ENCODE measurements at regions of chr18 and their contacts with region 1.

Region 1: DNA sequence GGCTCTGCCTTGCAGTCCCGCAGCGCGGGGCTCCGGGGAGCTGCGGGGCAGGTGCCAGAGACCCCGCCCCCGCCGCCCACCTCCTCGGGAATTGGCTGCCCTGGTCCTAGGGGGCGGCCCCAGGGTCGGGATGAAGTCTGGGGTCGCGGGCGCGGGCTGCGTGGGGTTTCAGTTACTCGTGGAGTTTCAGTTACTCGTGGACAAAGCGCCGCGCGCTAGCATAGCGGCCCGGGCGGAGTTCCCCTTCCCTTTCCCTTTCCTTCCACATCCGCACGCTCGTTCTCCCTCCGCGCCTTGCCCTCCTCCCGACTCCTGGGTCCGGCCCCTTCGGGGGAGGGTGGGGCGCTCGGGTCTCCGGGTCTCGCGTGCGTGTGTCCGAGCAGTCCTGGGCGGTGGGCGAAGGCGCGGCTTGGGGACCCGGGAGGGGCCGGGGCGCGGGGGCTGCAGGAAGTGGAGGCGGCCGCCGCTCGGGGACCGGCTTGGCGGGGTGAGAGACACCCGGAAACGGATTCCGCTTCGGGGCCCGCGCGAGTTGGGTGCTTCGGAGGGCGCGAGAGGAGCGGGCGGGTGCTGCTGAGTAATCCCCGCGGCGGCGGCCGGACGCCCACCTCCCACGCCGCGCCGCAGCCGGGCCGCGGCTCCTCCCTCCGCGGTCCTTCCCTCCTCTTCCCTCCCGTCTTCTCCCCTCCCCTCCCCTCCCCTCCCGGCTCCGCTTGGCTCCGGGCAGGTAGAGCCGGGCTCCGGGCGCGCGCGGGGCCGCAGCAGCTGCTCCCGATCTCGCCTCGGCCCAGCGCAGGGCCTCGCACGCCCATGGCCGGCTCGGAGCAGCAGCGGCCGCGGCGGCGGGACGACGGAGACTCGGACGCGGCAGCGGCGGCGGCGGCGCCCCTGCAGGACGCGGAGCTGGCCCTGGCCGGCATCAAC is at the start of gene TTC39C:
- DNase-seq: peak; percentile 58 to 90 (median 77)
- ATAC-seq: peak; percentile 60
- H3K4me3 ChIP-seq: peak within 1 kb of the TSS; percentile 91
- H3K4me3 Mint-ChIP-seq: peak within 1 kb of the TSS; percentile 94
- H3K27ac ChIP-seq: peak within 1 kb of the TSS; percentile 73 to 88
- H3K27ac Mint-ChIP-seq: peak within 1 kb of the TSS; percentile 90
- H3K4me1 ChIP-seq: peaks cover 67% of the 10 kb centered on the region
- H3K4me1 Mint-ChIP-seq: peaks cover 80% of the 10 kb centered on the region
- H3K27me3 ChIP-seq: no peaks in the 10 kb centered on the region
- H3K27me3 Mint-ChIP-seq: no peaks in the 10 kb centered on the region
- CTCF ChIP-seq: no peak
- total RNA-seq, gene TTC39C: 82.6 to 91.8 TPM

Region 2: DNA sequence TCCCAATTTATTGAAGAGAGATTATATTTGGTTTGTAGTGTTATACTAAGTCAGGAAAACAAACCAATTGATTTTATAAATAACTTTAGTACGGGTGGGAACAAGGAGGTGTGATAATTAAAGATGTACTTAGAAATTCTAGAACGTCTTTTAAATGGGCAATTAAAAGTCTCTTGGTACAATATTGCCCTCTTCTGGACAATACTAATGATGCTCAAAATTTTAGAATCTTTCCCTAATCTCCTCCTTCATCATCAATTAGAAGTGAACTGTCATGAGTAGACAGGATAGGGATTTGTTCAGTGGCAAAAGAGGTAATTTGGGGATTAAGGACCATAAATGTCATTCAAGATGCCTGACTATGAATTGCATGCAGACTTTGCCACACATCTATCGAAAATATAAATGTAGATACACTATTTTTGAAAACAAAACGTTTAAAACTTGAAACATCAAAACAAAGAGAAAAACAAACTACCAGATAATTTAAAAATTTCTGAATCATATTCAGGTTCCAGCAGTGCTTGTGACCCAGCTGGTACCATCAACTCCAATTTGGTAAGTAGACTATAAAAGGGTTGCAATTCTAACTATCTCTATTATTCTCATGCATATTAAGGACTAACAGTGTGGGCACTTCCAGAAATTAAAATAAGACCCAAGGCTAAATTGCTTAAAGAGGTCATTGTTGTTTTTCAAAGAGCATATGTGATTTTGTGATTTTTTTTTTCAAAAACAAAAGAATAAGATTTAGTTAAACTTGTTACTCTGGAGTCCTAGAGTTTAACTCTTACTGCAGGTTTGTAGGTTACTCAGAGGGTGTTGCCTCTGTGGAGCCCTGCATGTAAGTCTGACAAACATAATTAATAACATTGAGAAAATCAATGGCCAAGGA is 201.5 kb before region 1 on chr18:
- CTCF ChIA-PET with region 1: no interaction called
- POLR2A ChIA-PET with region 1: no interaction called
- intact Hi-C with region 1: loop called in 1 of 2 experiments (anchors 5 kb)
- DNase-seq: peak in 3 of 14 experiments; percentile 47 to 57 (median 49)
- ATAC-seq: peak; percentile 49
- H3K4me3 ChIP-seq: no peak overlapping the region
- H3K4me3 Mint-ChIP-seq: no peak overlapping the region
- H3K27ac ChIP-seq: no peak overlapping the region
- H3K27ac Mint-ChIP-seq: no peak overlapping the region
- H3K4me1 ChIP-seq: peaks cover 9% of the 10 kb centered on the region
- H3K4me1 Mint-ChIP-seq: peaks cover 11% of the 10 kb centered on the region
- H3K27me3 ChIP-seq: no peaks in the 10 kb centered on the region
- H3K27me3 Mint-ChIP-seq: no peaks in the 10 kb centered on the region
- CTCF ChIP-seq: peak; percentile 63

Region 3: DNA sequence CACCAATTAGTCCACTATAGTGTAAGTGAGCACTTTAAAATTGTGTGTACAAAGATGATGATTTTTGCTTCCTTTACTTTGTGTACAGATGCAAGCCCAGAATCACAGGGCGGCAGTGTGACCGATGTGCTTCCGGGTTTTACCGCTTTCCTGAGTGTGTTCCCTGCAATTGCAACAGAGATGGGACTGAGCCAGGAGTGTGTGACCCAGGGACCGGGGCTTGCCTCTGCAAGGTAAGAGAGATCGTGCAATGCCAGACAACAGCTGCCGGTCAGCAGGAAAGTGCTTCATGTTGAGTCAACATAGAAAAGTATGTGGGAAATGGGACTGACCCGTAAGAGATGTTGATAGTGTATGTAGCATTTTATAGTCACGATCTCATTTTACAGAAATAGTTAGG is 156.6 kb before region 1 on chr18:
- CTCF ChIA-PET with region 1: no interaction called
- POLR2A ChIA-PET with region 1: no interaction called
- intact Hi-C with region 1: no loop called
- DNase-seq: no peak
- ATAC-seq: no peak
- H3K4me3 ChIP-seq: no peak overlapping the region
- H3K4me3 Mint-ChIP-seq: no peak overlapping the region
- H3K27ac ChIP-seq: no peak overlapping the region
- H3K27ac Mint-ChIP-seq: no peak overlapping the region
- H3K4me1 ChIP-seq: peaks cover 6% of the 10 kb centered on the region
- H3K4me1 Mint-ChIP-seq: peaks cover 22% of the 10 kb centered on the region
- H3K27me3 ChIP-seq: no peaks in the 10 kb centered on the region
- H3K27me3 Mint-ChIP-seq: no peaks in the 10 kb centered on the region
- CTCF ChIP-seq: no peak

Region 4: DNA sequence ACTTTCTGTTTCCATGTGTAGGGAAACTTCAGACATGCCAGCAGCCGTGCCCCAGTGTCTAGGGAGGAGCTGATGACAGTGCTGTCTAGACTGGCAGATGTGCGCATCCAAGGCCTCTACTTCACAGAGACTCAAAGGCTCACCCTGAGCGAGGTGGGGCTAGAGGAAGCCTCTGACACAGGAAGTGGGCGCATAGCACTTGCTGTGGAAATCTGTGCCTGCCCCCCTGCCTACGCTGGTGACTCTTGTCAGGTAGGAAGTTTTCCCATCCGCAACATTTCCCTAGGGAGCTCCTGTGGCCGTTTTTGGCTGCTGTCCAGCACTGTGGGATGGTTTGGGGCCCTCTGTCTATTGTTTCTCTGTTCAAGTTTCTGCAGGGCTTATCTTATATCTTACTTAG is 142.9 kb before region 1 on chr18:
- CTCF ChIA-PET with region 1: no interaction called
- POLR2A ChIA-PET with region 1: interaction called, 4 read pairs
- intact Hi-C with region 1: loop called in 1 of 2 experiments (anchors 5 kb)
- DNase-seq: peak; percentile 54 to 90 (median 72)
- ATAC-seq: peak; percentile 94
- H3K4me3 ChIP-seq: no peak overlapping the region
- H3K4me3 Mint-ChIP-seq: peak overlapping the region; percentile 73
- H3K27ac ChIP-seq: peak overlapping the region in 1 of 2 donors; percentile 9
- H3K27ac Mint-ChIP-seq: peak overlapping the region; percentile 93
- H3K4me1 ChIP-seq: peaks cover 35% of the 10 kb centered on the region
- H3K4me1 Mint-ChIP-seq: peaks cover 55% of the 10 kb centered on the region
- H3K27me3 ChIP-seq: no peaks in the 10 kb centered on the region
- H3K27me3 Mint-ChIP-seq: no peaks in the 10 kb centered on the region
- CTCF ChIP-seq: no peak

Region 5: GRCh38 chr18:23967321-23968089 is 46.8 kb before region 1 on chr18:
- CTCF ChIA-PET with region 1: interaction called, 8 read pairs
- POLR2A ChIA-PET with region 1: interaction called, 15 read pairs
- intact Hi-C with region 1: loop called in 1 of 2 experiments (anchors 5 kb)
- DNase-seq: peak in 5 of 14 experiments; percentile 10 to 83 (median 48)
- ATAC-seq: no peak
- H3K4me3 ChIP-seq: no peak overlapping the region
- H3K4me3 Mint-ChIP-seq: no peak overlapping the region
- H3K27ac ChIP-seq: no peak overlapping the region
- H3K27ac Mint-ChIP-seq: peak overlapping the region; percentile 95
- H3K4me1 ChIP-seq: peaks cover 86% of the 10 kb centered on the region
- H3K4me1 Mint-ChIP-seq: peaks cover 82% of the 10 kb centered on the region
- H3K27me3 ChIP-seq: no peaks in the 10 kb centered on the region
- H3K27me3 Mint-ChIP-seq: no peaks in the 10 kb centered on the region
- CTCF ChIP-seq: no peak

Region 6: DNA sequence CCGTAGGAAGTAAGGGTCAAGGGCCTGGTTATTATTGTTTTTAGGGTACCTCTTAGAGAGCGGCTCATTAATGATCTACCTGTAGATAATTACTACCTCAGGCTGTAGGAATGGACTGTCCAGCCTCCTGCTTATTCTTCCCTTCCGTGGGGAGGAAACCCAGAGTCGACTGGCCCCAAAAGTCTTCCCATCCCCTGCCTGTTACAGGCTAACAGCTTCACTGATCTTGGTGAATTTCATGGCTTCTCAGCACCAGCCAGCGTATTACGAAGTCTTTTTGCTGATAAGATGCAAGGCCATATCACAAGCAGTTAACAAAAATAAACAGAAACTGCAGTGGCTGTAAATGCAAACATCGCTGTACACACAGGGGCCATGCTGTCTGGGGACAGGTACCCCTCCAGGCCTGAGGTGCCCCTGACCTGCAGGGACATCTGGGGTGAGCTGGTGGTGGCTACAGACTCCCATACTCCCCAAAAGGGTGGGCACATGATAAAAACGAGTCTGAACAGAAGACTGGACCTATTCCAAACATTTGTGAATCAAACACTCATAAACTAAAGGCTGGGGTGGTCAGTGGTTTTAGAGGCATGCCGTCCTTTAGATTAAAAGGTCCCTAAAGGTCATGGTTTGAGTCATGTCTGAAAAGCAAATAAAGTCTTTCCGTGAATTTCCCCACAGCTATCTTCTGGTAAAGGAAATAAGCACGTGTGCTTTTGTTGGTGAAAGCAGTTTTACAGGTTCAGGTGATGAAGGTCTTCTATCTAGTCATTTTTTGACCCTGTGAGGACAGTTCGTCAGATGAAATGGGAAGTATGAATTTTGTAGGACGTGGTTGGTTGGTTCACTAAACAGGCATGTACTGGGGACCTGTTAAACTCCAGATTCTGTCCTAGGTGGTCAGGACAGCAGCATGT is 37.0 kb after region 1 on chr18:
- CTCF ChIA-PET with region 1: no interaction called
- POLR2A ChIA-PET with region 1: interaction called, 8 read pairs
- intact Hi-C with region 1: loop called (anchors 2 to 5 kb)
- DNase-seq: no peak
- ATAC-seq: no peak
- H3K4me3 ChIP-seq: no peak overlapping the region
- H3K4me3 Mint-ChIP-seq: peak overlapping the region; percentile 39
- H3K27ac ChIP-seq: peak overlapping the region; percentile 3 to 10
- H3K27ac Mint-ChIP-seq: peak overlapping the region; percentile 63
- H3K4me1 ChIP-seq: peaks cover 53% of the 10 kb centered on the region
- H3K4me1 Mint-ChIP-seq: peaks cover 95% of the 10 kb centered on the region
- H3K27me3 ChIP-seq: no peaks in the 10 kb centered on the region
- H3K27me3 Mint-ChIP-seq: no peaks in the 10 kb centered on the region
- CTCF ChIP-seq: no peak

Measured in CD4-positive, alpha-beta T cell (primary cell).